Testis (tissue), 5 donors: ENCODE measurements at regions of chr3 and their contacts with region 1.

Region 1: DNA sequence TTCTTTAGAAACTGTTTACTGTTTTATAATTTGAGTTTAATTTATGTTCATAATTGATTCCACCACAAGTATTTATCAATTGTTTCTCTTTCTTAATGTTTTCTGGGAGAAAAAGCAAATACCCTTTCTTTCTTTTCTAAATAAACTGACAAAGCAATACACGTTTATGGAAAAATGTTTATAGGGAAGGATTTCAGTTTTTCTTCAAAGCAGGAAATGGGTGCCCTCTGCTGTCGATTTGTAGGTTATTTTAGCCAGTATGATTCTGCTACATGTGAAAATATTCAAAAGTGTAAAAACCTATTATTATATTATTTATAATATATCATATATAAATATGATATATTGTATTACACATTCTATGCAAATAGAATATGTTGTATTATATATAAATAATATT is 921.0 kb upstream of the ROBO1 start:
- DNase-seq: peak; percentile 39
- H3K4me3 ChIP-seq: no peak overlapping the region
- H3K27ac ChIP-seq: no peak overlapping the region
- H3K4me1 ChIP-seq: no peaks in the 10 kb centered on the region
- H3K27me3 ChIP-seq: no peaks in the 10 kb centered on the region
- CTCF ChIP-seq: peak in 1 of 3 experiments; percentile 43
- POLR2A ChIP-seq: no peak

Region 2: GRCh38 chr3:79521238-79521848 is 1167.5 kb before region 1 on chr3:
- intact Hi-C with region 1: loop called (anchors 5 kb)
- DNase-seq: no peak
- H3K4me3 ChIP-seq: no peak overlapping the region
- H3K27ac ChIP-seq: no peak overlapping the region
- H3K4me1 ChIP-seq: no peaks in the 10 kb centered on the region
- H3K27me3 ChIP-seq: no peaks in the 10 kb centered on the region
- CTCF ChIP-seq: peak; percentile 50 to 66 (median 55)
- POLR2A ChIP-seq: no peak

Region 3: GRCh38 chr3:80836395-80836794 is 147.6 kb after region 1 on chr3:
- intact Hi-C with region 1: no loop called
- DNase-seq: no peak
- H3K4me3 ChIP-seq: no peak overlapping the region
- H3K27ac ChIP-seq: no peak overlapping the region
- H3K4me1 ChIP-seq: no peaks in the 10 kb centered on the region
- H3K27me3 ChIP-seq: no peaks in the 10 kb centered on the region
- CTCF ChIP-seq: no peak
- POLR2A ChIP-seq: no peak